ENCODE measurements at regions of chrX and their contacts with region 1.

Region 1: DNA sequence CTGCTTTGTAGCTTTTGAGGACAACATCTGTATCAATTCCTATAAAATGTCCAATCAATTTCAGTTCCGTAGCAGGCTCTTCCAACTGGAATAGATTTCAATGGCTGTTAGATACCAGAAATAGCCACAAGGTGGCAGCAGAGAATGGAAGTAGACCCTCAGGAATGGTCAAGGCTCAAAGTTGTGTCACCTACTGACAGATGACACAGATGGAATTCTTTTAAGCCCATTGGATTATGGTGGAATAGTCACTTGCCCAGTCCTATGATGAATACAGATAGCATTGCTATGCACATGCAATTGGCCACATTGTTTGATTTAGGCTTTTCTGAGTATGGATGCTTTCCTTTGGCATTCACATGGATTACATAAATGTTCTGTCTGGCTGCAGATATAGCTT is 130.4 kb upstream of the RADX start:
- DNase-seq: peak in 10 of 14 experiments; percentile 1 to 68 (median 8)
- ATAC-seq: no peak
- H3K4me3 ChIP-seq: no peak overlapping the region
- H3K4me3 Mint-ChIP-seq: no peak overlapping the region
- H3K27ac ChIP-seq: no peak overlapping the region
- H3K27ac Mint-ChIP-seq: no peak overlapping the region
- H3K4me1 ChIP-seq: peaks cover 3% of the 10 kb centered on the region
- H3K4me1 Mint-ChIP-seq: peaks cover 20% of the 10 kb centered on the region
- H3K27me3 ChIP-seq: no peaks in the 10 kb centered on the region
- H3K27me3 Mint-ChIP-seq: no peaks in the 10 kb centered on the region
- CTCF ChIP-seq: peak; percentile 69

Region 2: GRCh38 chrX:106611679-106612392 is 130.5 kb after region 1 on chrX and contains the start of gene RADX:
- CTCF ChIA-PET with region 1: no interaction called
- POLR2A ChIA-PET with region 1: interaction called, 11 read pairs
- intact Hi-C with region 1: loop called in 1 of 2 experiments (anchors 5 kb)
- DNase-seq: peak; percentile 74 to 95 (median 83)
- ATAC-seq: peak; percentile 90
- H3K4me3 ChIP-seq: peak within 1 kb of the TSS; percentile 83
- H3K4me3 Mint-ChIP-seq: peak within 1 kb of the TSS; percentile 98
- H3K27ac ChIP-seq: peak within 1 kb of the TSS; percentile 29 to 84
- H3K27ac Mint-ChIP-seq: peak within 1 kb of the TSS; percentile 96
- H3K4me1 ChIP-seq: no peaks in the 10 kb centered on the region
- H3K4me1 Mint-ChIP-seq: peaks cover 37% of the 10 kb centered on the region
- H3K27me3 ChIP-seq: no peaks in the 10 kb centered on the region
- H3K27me3 Mint-ChIP-seq: no peaks in the 10 kb centered on the region
- CTCF ChIP-seq: no peak
- total RNA-seq, gene RADX: 8.1 to 9.4 TPM

Region 3: GRCh38 chrX:106619797-106620196 is 138.5 kb after region 1 on chrX:
- CTCF ChIA-PET with region 1: interaction called, 10 read pairs
- POLR2A ChIA-PET with region 1: interaction called, 3 read pairs
- intact Hi-C with region 1: loop called (anchors 2 to 5 kb)
- DNase-seq: peak in 3 of 14 experiments; percentile 13 to 20 (median 20)
- ATAC-seq: no peak
- H3K4me3 ChIP-seq: no peak overlapping the region
- H3K4me3 Mint-ChIP-seq: no peak overlapping the region
- H3K27ac ChIP-seq: no peak overlapping the region
- H3K27ac Mint-ChIP-seq: no peak overlapping the region
- H3K4me1 ChIP-seq: no peaks in the 10 kb centered on the region
- H3K4me1 Mint-ChIP-seq: peaks cover 6% of the 10 kb centered on the region
- H3K27me3 ChIP-seq: no peaks in the 10 kb centered on the region
- H3K27me3 Mint-ChIP-seq: no peaks in the 10 kb centered on the region
- CTCF ChIP-seq: no peak

Region 4: DNA sequence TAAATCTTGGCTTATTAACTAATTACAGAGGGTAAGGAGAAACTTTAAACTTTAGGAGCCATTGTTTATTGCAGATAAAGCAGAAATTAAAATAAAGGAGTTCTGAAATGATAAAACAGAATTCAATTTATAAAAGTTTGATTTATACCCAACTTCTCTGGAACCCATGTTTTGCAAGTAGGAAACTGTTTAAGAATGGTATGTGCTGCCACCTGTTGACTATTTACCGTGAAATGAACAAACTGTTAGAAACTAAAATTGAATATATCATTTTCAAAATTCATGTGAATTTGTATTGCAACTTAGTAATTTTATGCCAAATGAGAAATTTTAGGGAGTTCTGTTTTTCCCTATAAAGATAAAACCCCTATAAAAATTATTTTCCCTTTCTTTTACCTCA is 310.2 kb after region 1 on chrX:
- CTCF ChIA-PET with region 1: no interaction called
- POLR2A ChIA-PET with region 1: no interaction called
- intact Hi-C with region 1: loop called (anchors 1 kb)
- DNase-seq: peak in 3 of 14 experiments; percentile 4 to 21 (median 9)
- ATAC-seq: no peak
- H3K4me3 ChIP-seq: no peak overlapping the region
- H3K4me3 Mint-ChIP-seq: no peak overlapping the region
- H3K27ac ChIP-seq: no peak overlapping the region
- H3K27ac Mint-ChIP-seq: no peak overlapping the region
- H3K4me1 ChIP-seq: no peaks in the 10 kb centered on the region
- H3K4me1 Mint-ChIP-seq: no peaks in the 10 kb centered on the region
- H3K27me3 ChIP-seq: no peaks in the 10 kb centered on the region
- H3K27me3 Mint-ChIP-seq: no peaks in the 10 kb centered on the region
- CTCF ChIP-seq: peak; percentile 32

Region 5: DNA sequence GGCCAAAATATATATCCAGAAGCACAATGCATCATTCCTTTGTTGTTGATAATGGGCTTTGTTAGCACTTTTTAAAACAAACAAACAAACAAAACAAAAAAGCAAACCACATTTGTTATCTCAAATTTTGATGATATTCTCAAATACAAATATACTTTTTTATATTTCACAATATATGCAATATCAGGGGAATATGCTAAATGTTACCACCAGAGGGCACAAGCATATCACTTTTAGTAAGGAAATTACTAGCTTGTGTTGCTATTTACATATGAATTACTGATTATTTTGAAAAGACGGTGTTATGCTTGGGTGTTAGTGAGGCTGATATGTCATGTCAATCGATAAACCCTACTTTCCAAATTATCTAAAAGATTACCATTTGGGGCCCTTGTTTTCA is 392.7 kb after region 1 on chrX:
- CTCF ChIA-PET with region 1: no interaction called
- POLR2A ChIA-PET with region 1: no interaction called
- intact Hi-C with region 1: loop called (anchors 5 kb)
- DNase-seq: peak in 3 of 14 experiments; percentile 18 to 34 (median 33)
- ATAC-seq: no peak
- H3K4me3 ChIP-seq: no peak overlapping the region
- H3K4me3 Mint-ChIP-seq: no peak overlapping the region
- H3K27ac ChIP-seq: no peak overlapping the region
- H3K27ac Mint-ChIP-seq: no peak overlapping the region
- H3K4me1 ChIP-seq: no peaks in the 10 kb centered on the region
- H3K4me1 Mint-ChIP-seq: no peaks in the 10 kb centered on the region
- H3K27me3 ChIP-seq: no peaks in the 10 kb centered on the region
- H3K27me3 Mint-ChIP-seq: peaks cover 6% of the 10 kb centered on the region
- CTCF ChIP-seq: peak; percentile 62

Region 6: DNA sequence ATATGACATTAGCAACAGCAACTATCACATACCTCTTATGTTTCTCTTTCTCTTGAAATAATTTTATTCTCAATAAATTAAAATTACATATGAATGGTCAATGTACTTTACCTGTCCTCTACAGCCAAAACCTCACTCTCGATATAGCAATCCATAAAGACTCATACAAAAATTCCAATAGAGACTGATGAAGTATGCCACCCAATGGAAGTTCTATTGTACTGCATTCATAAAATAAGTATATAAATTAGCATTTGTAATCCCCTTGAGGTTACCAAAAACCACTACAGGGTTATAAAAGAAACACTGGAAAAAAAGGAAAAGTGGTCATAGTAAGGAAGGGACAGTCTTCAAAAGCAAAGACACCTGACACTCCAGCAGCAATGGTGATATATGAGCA is 471.6 kb after region 1 on chrX:
- CTCF ChIA-PET with region 1: no interaction called
- POLR2A ChIA-PET with region 1: no interaction called
- intact Hi-C with region 1: loop called in 1 of 2 experiments (anchors 5 kb)
- DNase-seq: peak in 3 of 14 experiments; percentile 2 to 7 (median 3)
- ATAC-seq: no peak
- H3K4me3 ChIP-seq: no peak overlapping the region
- H3K4me3 Mint-ChIP-seq: no peak overlapping the region
- H3K27ac ChIP-seq: no peak overlapping the region
- H3K27ac Mint-ChIP-seq: no peak overlapping the region
- H3K4me1 ChIP-seq: no peaks in the 10 kb centered on the region
- H3K4me1 Mint-ChIP-seq: no peaks in the 10 kb centered on the region
- H3K27me3 ChIP-seq: no peaks in the 10 kb centered on the region
- H3K27me3 Mint-ChIP-seq: no peaks in the 10 kb centered on the region
- CTCF ChIP-seq: peak; percentile 31

Measured in CD4-positive, alpha-beta T cell (primary cell).